BJ (cell line): ENCODE measurements at regions of chr3 and their contacts with region 1.

Region 1: DNA sequence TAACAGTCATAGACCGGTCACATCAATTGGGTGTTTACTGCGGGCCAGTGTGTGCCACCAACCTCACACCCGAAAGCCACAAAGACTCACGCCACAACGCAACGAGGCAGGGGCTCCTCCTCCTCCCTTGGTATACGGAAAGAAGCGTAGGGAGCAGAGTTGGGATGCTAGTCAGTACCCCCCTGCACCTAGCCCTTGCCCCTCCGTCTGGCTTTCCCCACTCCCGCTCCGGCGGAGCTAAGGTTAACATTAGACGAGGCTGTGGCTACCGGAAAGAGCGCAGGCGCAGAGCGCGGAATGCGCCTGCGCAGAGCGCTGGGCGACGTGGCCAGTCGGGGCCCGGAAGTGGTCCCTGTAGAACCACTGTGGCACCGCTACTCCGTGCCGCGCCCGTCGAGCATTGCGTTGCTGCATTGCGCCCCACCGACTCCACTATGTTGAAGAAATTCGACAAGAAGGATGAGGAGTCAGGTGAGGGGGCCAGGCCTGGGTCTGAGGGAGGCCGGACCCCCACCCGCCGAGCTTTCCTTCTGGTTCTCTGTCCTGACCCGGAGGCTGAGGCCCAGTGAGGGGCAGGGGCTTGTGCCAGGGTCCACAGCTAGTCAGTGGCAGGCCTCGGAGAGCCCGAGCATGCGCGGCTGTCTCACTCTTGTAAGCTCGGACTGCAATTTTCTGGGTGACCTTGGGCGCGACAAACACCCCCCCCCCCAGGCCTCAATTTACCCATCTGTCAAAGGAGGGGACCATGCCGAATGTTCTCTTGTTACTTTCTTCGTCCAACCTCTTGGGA is at the start of gene COPG1:
- DNase-seq: peak; percentile 52
- H3K4me3 ChIP-seq: peak within 1 kb of the TSS; percentile 79
- H3K27me3 ChIP-seq: no peaks in the 10 kb centered on the region
- CTCF ChIP-seq: no peak
- polyA plus RNA-seq, gene COPG1: 181 and 220 TPM in 2 replicates

Region 2: GRCh38 chr3:128701342-128702212 is 547.9 kb before region 1 on chr3:
- CTCF ChIA-PET with region 1: no interaction called
- POLR2A ChIA-PET with region 1: no interaction called
- DNase-seq: no peak
- H3K4me3 ChIP-seq: no peak overlapping the region
- H3K27me3 ChIP-seq: no peaks in the 10 kb centered on the region
- CTCF ChIP-seq: no peak

Region 3: GRCh38 chr3:128969993-128970739 is 279.3 kb before region 1 on chr3:
- CTCF ChIA-PET with region 1: interaction called, 62 read pairs
- POLR2A ChIA-PET with region 1: no interaction called
- DNase-seq: no peak
- H3K4me3 ChIP-seq: no peak overlapping the region
- H3K27me3 ChIP-seq: peaks cover 15% of the 10 kb centered on the region
- CTCF ChIP-seq: peak; percentile 92

Region 4: GRCh38 chr3:129052675-129053074 is 196.8 kb before region 1 on chr3:
- CTCF ChIA-PET with region 1: interaction called, 91 read pairs
- POLR2A ChIA-PET with region 1: no interaction called
- DNase-seq: no peak
- H3K4me3 ChIP-seq: no peak overlapping the region
- H3K27me3 ChIP-seq: peaks cover 9% of the 10 kb centered on the region
- CTCF ChIP-seq: no peak

Region 5: GRCh38 chr3:129112308-129113052 is 137.0 kb before region 1 on chr3:
- CTCF ChIA-PET with region 1: interaction called, 3 read pairs
- POLR2A ChIA-PET with region 1: interaction called, 10 read pairs
- DNase-seq: no peak
- H3K4me3 ChIP-seq: no peak overlapping the region
- H3K27me3 ChIP-seq: no peaks in the 10 kb centered on the region
- CTCF ChIP-seq: no peak

Region 6: GRCh38 chr3:129173206-129173605 is 76.3 kb before region 1 on chr3:
- CTCF ChIA-PET with region 1: interaction called, 22 read pairs
- POLR2A ChIA-PET with region 1: no interaction called
- DNase-seq: no peak
- H3K4me3 ChIP-seq: no peak overlapping the region
- H3K27me3 ChIP-seq: no peaks in the 10 kb centered on the region
- CTCF ChIP-seq: no peak

Region 7: DNA sequence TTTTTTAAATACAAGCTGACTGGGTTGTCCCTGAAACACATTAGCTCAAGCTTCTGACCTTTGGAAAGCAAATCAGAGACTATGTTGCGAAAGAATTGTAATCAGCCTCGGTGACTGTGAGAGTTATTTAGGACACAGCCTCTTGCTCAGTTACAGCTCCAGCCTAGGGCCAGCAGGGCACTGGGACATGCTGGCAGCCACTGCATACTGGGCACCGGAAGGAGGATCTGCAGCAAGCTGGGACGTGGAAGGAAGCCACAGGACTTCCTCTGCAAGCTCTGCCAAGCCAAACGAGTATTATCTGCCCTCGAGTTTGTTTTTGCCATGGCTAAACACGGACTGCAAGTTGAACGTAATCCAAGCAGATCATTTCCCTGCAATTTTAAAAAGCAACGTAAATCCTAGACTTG is 24.5 kb before region 1 on chr3:
- CTCF ChIA-PET with region 1: interaction called, 18 read pairs
- POLR2A ChIA-PET with region 1: no interaction called
- DNase-seq: no peak
- H3K4me3 ChIP-seq: no peak overlapping the region
- H3K27me3 ChIP-seq: no peaks in the 10 kb centered on the region
- CTCF ChIP-seq: no peak

Region 8: DNA sequence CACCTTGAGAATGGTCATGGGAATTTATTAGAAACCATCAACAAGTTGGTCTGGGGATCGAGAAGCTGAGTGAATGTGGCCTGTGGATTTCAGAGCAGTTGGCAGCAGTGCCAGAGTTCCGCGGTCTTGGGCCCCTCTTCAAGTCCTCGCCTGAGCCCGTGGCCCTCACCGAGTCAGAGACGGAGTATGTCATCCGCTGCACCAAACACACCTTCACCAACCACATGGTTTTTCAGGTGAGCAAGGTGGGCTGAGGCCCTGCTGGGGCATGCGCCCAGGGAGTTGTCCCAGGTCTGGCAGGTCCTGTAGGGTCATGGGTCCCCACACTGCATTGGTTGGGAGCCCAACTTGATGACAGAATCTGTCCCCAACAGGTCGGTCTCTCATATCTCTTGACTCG is 22.2 kb after region 1 on chr3:
- CTCF ChIA-PET with region 1: interaction called, 18 read pairs
- POLR2A ChIA-PET with region 1: no interaction called
- DNase-seq: no peak
- H3K4me3 ChIP-seq: no peak overlapping the region
- H3K27me3 ChIP-seq: no peaks in the 10 kb centered on the region
- CTCF ChIP-seq: no peak